CD8-positive, alpha-beta T cell (primary cell): ENCODE measurements at regions of chr13 and their contacts with region 1.

Region 1: GRCh38 chr13:75482070-75482819 is at the start of gene TBC1D4:
- DNase-seq: peak; percentile 16 to 70 (median 41)
- ATAC-seq: peak; percentile 72
- H3K4me3 ChIP-seq: peak within 1 kb of the TSS; percentile 56 to 66
- H3K4me3 Mint-ChIP-seq: peak within 1 kb of the TSS; percentile 94
- H3K27ac ChIP-seq: no peak within 1 kb of the TSS
- H3K27ac Mint-ChIP-seq: no peak within 1 kb of the TSS
- H3K4me1 ChIP-seq: peaks cover 5% of the 10 kb centered on the region
- H3K4me1 Mint-ChIP-seq: peaks cover 12% of the 10 kb centered on the region
- H3K27me3 ChIP-seq: peaks cover 11 to 12% of the 10 kb centered on the region in 2 experiments
- H3K27me3 Mint-ChIP-seq: peaks cover 66% of the 10 kb centered on the region
- CTCF ChIP-seq: peak; percentile 47
- total RNA-seq, gene TBC1D4: 20.2 to 23.1 TPM

Region 2: GRCh38 chr13:75372517-75372916 is 109.7 kb before region 1 on chr13:
- CTCF ChIA-PET with region 1: interaction called, 4 read pairs
- POLR2A ChIA-PET with region 1: no interaction called
- intact Hi-C with region 1: loop called in 1 of 2 experiments (anchors 5 kb)
- DNase-seq: peak in 2 of 9 experiments; percentile 41 to 60
- ATAC-seq: peak; percentile 80
- H3K4me3 ChIP-seq: no peak overlapping the region
- H3K4me3 Mint-ChIP-seq: no peak overlapping the region
- H3K27ac ChIP-seq: no peak overlapping the region
- H3K27ac Mint-ChIP-seq: no peak overlapping the region
- H3K4me1 ChIP-seq: no peaks in the 10 kb centered on the region
- H3K4me1 Mint-ChIP-seq: no peaks in the 10 kb centered on the region
- H3K27me3 ChIP-seq: no peaks in the 10 kb centered on the region
- H3K27me3 Mint-ChIP-seq: peaks cover 3% of the 10 kb centered on the region
- CTCF ChIP-seq: peak; percentile 80

Region 3: DNA sequence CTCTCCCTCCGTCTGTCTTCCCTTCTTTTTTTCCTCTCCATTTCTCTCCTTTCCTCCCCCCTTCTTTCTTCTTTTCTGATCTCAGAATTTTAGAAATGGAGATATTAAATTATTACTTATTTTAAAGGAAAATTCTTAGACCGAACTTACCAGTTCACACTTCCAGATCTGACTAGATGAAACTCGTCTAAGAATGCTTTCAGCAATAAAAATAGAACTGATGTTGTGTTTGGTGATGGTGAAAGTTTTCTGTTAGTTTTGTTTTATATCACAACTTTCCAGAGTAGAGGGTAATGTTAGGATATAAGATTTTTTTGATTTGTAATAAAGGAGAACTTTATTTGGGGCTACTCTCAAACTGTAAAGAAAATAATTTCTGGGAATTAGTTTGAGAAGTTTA is 97.3 kb after region 1 on chr13:
- CTCF ChIA-PET with region 1: no interaction called
- POLR2A ChIA-PET with region 1: no interaction called
- intact Hi-C with region 1: no loop called
- DNase-seq: no peak
- ATAC-seq: no peak
- H3K4me3 ChIP-seq: no peak overlapping the region
- H3K4me3 Mint-ChIP-seq: no peak overlapping the region
- H3K27ac ChIP-seq: no peak overlapping the region
- H3K27ac Mint-ChIP-seq: no peak overlapping the region
- H3K4me1 ChIP-seq: no peaks in the 10 kb centered on the region
- H3K4me1 Mint-ChIP-seq: peaks cover 9% of the 10 kb centered on the region
- H3K27me3 ChIP-seq: no peaks in the 10 kb centered on the region
- H3K27me3 Mint-ChIP-seq: no peaks in the 10 kb centered on the region
- CTCF ChIP-seq: no peak